ENCODE measurements at regions of chr3 and their contacts with region 1.

Region 1: DNA sequence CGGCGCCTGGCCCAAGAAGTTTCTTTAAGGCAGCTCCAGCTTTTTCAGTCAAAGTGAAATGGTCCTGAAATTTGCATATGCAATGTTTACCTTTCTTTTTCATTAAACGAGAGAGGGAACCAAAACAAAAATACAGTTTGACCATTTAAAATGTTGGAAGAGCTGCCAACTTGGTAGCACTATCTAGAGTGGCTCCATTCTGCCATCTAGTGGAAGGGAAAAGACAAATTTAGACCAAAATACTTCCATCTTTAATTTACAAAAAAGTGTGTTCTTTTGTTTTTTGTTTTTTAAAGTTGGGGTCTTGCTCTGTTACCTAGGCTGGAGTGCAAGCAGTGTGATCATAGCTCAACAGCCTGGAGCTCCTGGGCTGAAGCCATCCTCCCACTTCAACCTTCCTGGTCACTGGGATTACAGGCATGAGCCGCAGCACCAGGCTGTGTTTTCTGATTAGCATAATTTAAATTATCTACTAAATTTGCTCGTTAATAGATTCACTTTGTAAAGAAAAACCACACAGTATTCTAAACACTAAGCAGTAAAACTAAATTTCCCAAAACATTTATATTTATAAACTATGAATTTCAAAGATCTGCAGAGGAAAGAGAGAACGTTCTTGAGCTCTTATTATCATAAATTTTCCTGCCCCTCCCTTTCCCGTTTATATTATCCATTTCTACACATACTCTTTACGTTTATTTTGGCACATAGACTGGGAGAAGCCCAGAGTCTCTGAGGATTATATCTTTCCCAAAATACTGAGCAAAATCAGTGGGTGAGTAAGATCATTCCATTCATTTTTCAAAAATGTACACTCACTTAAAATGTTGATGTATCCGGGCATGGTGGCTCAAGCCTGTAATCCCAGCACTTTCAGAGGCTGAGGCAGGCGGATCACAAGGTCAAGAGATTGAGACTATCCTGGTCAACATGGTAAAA is 15.4 kb upstream of the RFC4 start:
- DNase-seq: peak in 4 of 14 experiments; percentile 31 to 75 (median 70)
- ATAC-seq: no peak
- H3K4me3 ChIP-seq: no peak overlapping the region
- H3K4me3 Mint-ChIP-seq: no peak overlapping the region
- H3K27ac ChIP-seq: no peak overlapping the region
- H3K27ac Mint-ChIP-seq: no peak overlapping the region
- H3K4me1 ChIP-seq: peaks cover 16% of the 10 kb centered on the region
- H3K4me1 Mint-ChIP-seq: peaks cover 14% of the 10 kb centered on the region
- H3K27me3 ChIP-seq: peaks cover 20 to 25% of the 10 kb centered on the region in 2 experiments
- H3K27me3 Mint-ChIP-seq: peaks cover 20% of the 10 kb centered on the region
- CTCF ChIP-seq: peak; percentile 78

Region 2: GRCh38 chr3:186268616-186269448 is 552.9 kb before region 1 on chr3:
- CTCF ChIA-PET with region 1: no interaction called
- POLR2A ChIA-PET with region 1: no interaction called
- intact Hi-C with region 1: loop called in 1 of 2 experiments (anchors 5 kb)
- DNase-seq: no peak
- ATAC-seq: no peak
- H3K4me3 ChIP-seq: no peak overlapping the region
- H3K4me3 Mint-ChIP-seq: no peak overlapping the region
- H3K27ac ChIP-seq: no peak overlapping the region
- H3K27ac Mint-ChIP-seq: no peak overlapping the region
- H3K4me1 ChIP-seq: no peaks in the 10 kb centered on the region
- H3K4me1 Mint-ChIP-seq: no peaks in the 10 kb centered on the region
- H3K27me3 ChIP-seq: no peaks in the 10 kb centered on the region
- H3K27me3 Mint-ChIP-seq: no peaks in the 10 kb centered on the region
- CTCF ChIP-seq: no peak

Region 3: DNA sequence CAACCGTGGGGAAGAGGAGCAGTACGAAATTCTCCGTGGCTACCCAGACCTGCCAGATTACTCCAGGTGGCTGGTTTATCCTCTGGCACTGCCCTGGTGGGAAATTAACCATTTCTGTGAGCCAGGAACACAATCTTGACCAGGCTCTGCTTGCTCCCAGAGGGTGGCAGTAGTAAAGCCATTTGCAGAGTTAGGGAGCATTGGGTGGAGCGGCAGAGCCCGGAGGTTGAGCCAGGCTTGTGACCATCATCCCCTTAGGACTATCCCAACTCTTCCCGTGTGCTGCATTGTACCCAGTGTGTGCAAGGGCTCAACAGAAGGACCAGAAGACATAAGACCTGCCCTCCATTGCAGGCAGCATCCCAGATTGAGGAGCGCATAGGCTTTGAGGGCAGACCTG is 99.2 kb before region 1 on chr3:
- CTCF ChIA-PET with region 1: no interaction called
- POLR2A ChIA-PET with region 1: no interaction called
- intact Hi-C with region 1: loop called in 1 of 2 experiments (anchors 5 kb)
- DNase-seq: peak in 1 of 14 experiments; percentile 9
- ATAC-seq: no peak
- H3K4me3 ChIP-seq: no peak overlapping the region
- H3K4me3 Mint-ChIP-seq: no peak overlapping the region
- H3K27ac ChIP-seq: no peak overlapping the region
- H3K27ac Mint-ChIP-seq: no peak overlapping the region
- H3K4me1 ChIP-seq: no peaks in the 10 kb centered on the region
- H3K4me1 Mint-ChIP-seq: no peaks in the 10 kb centered on the region
- H3K27me3 ChIP-seq: no peaks in the 10 kb centered on the region
- H3K27me3 Mint-ChIP-seq: no peaks in the 10 kb centered on the region
- CTCF ChIP-seq: no peak

Measured in CD4-positive, alpha-beta T cell (primary cell).